Thyroid gland (tissue), 4 donors: ENCODE measurements at regions of chr17 and their contacts with region 1.

Region 1: GRCh38 chr17:74379495-74380085 is 12.3 kb downstream of the GPR142 start:
- DNase-seq: peak; percentile 94 to 96
- H3K4me3 ChIP-seq: no peak overlapping the region
- H3K27ac ChIP-seq: peak overlapping the region in 1 of 3 donors; percentile 32
- H3K4me1 ChIP-seq: peaks cover 6 to 21% of the 10 kb centered on the region in 2 donors
- H3K27me3 ChIP-seq: no peaks in the 10 kb centered on the region
- CTCF ChIP-seq: peak; percentile 84 to 98 (median 96)
- POLR2A ChIP-seq: no peak

Region 2: GRCh38 chr17:74135391-74136167 is 244.0 kb before region 1 on chr17:
- intact Hi-C with region 1: no loop called
- DNase-seq: no peak
- H3K4me3 ChIP-seq: no peak overlapping the region
- H3K27ac ChIP-seq: no peak overlapping the region
- H3K4me1 ChIP-seq: no peaks in the 10 kb centered on the region
- H3K27me3 ChIP-seq: no peaks in the 10 kb centered on the region
- CTCF ChIP-seq: no peak
- POLR2A ChIP-seq: no peak

Region 3: GRCh38 chr17:74454199-74455024 is 74.8 kb after region 1 on chr17:
- intact Hi-C with region 1: loop called (anchors 2 kb)
- DNase-seq: peak; percentile 95
- H3K4me3 ChIP-seq: peak overlapping the region in 1 of 3 donors; percentile 33
- H3K27ac ChIP-seq: peak overlapping the region; percentile 53 to 92 (median 77)
- H3K4me1 ChIP-seq: peaks cover 17 to 57% of the 10 kb centered on the region in 2 donors
- H3K27me3 ChIP-seq: no peaks in the 10 kb centered on the region
- CTCF ChIP-seq: peak in 3 of 6 experiments; percentile 20 to 44 (median 40)
- POLR2A ChIP-seq: peak in 1 of 2 donors; percentile 80